ENCODE measurements at regions of chr2 and their contacts with region 1.

Region 1: GRCh38 chr2:172465417-172466334 is 38.3 kb downstream of the ITGA6 start:
- DNase-seq: peak; percentile 82
- H3K4me3 Mint-ChIP-seq: peak overlapping the region; percentile 38
- H3K27ac Mint-ChIP-seq: peak overlapping the region; percentile 95
- H3K4me1 Mint-ChIP-seq: peaks cover 58% of the 10 kb centered on the region
- H3K27me3 Mint-ChIP-seq: no peaks in the 10 kb centered on the region
- CTCF ChIP-seq: peak; percentile 87

Region 2: GRCh38 chr2:171409436-171409971 is 1056.2 kb before region 1 on chr2:
- CTCF ChIA-PET with region 1: no interaction called
- POLR2A ChIA-PET with region 1: no interaction called
- intact Hi-C with region 1: no loop called
- DNase-seq: peak; percentile 46
- H3K4me3 Mint-ChIP-seq: peak overlapping the region; percentile 81
- H3K27ac Mint-ChIP-seq: peak overlapping the region; percentile 94
- H3K4me1 Mint-ChIP-seq: peaks cover 44% of the 10 kb centered on the region
- H3K27me3 Mint-ChIP-seq: no peaks in the 10 kb centered on the region
- CTCF ChIP-seq: no peak

Region 3: DNA sequence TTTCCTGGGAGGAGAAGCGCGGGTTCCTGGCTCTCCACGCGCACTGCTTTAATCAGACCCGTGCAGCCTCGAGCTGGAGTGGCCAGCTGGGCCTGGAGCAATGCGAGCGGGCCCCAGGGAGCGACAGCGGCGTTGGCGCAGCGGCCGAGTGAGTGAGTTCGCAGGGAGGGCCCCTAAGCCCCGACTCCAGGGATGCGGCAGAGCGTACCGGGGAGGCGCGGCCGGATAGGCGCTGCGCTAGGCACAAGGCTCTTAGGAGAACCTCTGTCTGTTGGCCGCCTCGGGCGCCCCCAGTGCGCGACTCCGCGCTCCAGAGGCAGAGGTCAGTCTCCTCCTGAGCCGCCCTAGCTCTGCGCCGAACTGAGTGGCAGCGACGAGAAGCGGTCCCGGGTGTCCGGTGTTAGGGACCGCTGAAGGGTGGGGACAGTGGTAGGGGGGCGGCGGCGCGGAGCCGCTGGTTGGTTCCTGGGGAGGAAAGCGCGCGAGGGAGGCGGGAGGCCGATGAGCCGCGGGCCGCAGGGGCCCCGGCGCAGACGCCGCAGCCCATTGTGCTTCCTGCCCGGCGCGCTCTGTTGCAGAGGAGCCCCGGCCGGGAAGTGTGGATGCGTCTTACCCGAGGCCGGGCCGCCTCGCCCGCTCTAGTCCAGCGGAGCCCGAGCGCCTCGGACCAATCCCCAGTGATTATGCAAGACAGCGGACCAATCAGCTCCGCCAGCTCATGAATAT is 380.8 kb before region 1 on chr2:
- CTCF ChIA-PET with region 1: no interaction called
- POLR2A ChIA-PET with region 1: no interaction called
- intact Hi-C with region 1: no loop called
- DNase-seq: peak; percentile 96
- H3K4me3 Mint-ChIP-seq: peak overlapping the region; percentile 80
- H3K27ac Mint-ChIP-seq: peak overlapping the region; percentile 47
- H3K4me1 Mint-ChIP-seq: no peaks in the 10 kb centered on the region
- H3K27me3 Mint-ChIP-seq: no peaks in the 10 kb centered on the region
- CTCF ChIP-seq: no peak

Region 4: GRCh38 chr2:172102391-172103278 is 363.0 kb before region 1 on chr2 and contains the start of gene DLX2:
- CTCF ChIA-PET with region 1: interaction called, 5 read pairs
- POLR2A ChIA-PET with region 1: no interaction called
- intact Hi-C with region 1: loop called (anchors 2 kb)
- DNase-seq: peak; percentile 90
- H3K4me3 Mint-ChIP-seq: peak within 1 kb of the TSS; percentile 92
- H3K27ac Mint-ChIP-seq: peak within 1 kb of the TSS; percentile 88
- H3K4me1 Mint-ChIP-seq: peaks cover 13% of the 10 kb centered on the region
- H3K27me3 Mint-ChIP-seq: no peaks in the 10 kb centered on the region
- CTCF ChIP-seq: no peak
- total RNA-seq, gene DLX2: 1.1 and 1.9 TPM in 2 replicates

Region 5: GRCh38 chr2:172208791-172209325 is 256.8 kb before region 1 on chr2:
- CTCF ChIA-PET with region 1: interaction called, 20 read pairs
- POLR2A ChIA-PET with region 1: interaction called, 13 read pairs
- intact Hi-C with region 1: loop called (anchors 10 kb)
- DNase-seq: peak; percentile 56
- H3K4me3 Mint-ChIP-seq: peak overlapping the region; percentile 41
- H3K27ac Mint-ChIP-seq: peak overlapping the region; percentile 91
- H3K4me1 Mint-ChIP-seq: peaks cover 26% of the 10 kb centered on the region
- H3K27me3 Mint-ChIP-seq: no peaks in the 10 kb centered on the region
- CTCF ChIP-seq: no peak

Region 6: GRCh38 chr2:172253190-172254052 is 212.3 kb before region 1 on chr2:
- CTCF ChIA-PET with region 1: interaction called, 31 read pairs
- POLR2A ChIA-PET with region 1: interaction called, 23 read pairs
- intact Hi-C with region 1: no loop called
- DNase-seq: peak; percentile 100
- H3K4me3 Mint-ChIP-seq: peak overlapping the region; percentile 56
- H3K27ac Mint-ChIP-seq: peak overlapping the region; percentile 100
- H3K4me1 Mint-ChIP-seq: peaks cover 55% of the 10 kb centered on the region
- H3K27me3 Mint-ChIP-seq: no peaks in the 10 kb centered on the region
- CTCF ChIP-seq: no peak

Region 7: DNA sequence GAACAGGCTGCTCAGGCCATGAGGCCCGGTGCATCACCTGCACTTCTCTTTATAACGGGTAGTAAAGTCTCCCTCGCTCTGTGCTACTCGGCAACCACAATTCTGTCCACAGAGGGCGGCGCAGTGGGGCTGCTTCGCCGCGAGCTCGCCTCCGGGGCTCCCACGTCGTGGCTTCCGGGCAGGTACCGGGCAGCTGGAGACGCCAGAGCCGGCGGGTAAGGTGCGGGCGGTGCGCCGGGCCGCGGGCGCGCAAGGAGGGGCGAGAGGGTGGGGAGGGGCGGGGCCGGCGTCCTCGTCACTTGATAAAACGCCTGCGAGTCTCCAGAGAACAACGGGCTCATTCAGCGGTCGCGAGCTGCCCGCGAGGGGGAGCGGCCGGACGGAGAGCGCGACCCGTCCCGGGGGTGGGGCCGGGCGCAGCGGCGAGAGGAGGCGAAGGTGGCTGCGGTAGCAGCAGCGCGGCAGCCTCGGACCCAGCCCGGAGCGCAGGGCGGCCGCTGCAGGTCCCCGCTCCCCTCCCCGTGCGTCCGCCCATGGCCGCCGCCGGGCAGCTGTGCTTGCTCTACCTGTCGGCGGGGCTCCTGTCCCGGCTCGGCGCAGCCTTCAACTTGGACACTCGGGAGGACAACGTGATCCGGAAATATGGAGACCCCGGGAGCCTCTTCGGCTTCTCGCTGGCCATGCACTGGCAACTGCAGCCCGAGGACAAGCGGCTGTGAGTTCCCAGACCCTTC is 38.3 kb before region 1 on chr2 and contains the start of gene ITGA6:
- CTCF ChIA-PET with region 1: interaction called, 536 read pairs
- POLR2A ChIA-PET with region 1: interaction called, 350 read pairs
- intact Hi-C with region 1: loop called (anchors 1 kb)
- DNase-seq: peak; percentile 83
- H3K4me3 Mint-ChIP-seq: peak within 1 kb of the TSS; percentile 86
- H3K27ac Mint-ChIP-seq: peak within 1 kb of the TSS; percentile 95
- H3K4me1 Mint-ChIP-seq: peaks cover 16% of the 10 kb centered on the region
- H3K27me3 Mint-ChIP-seq: no peaks in the 10 kb centered on the region
- CTCF ChIP-seq: no peak
- total RNA-seq, gene ITGA6: 315 and 323 TPM in 2 replicates

Region 8: DNA sequence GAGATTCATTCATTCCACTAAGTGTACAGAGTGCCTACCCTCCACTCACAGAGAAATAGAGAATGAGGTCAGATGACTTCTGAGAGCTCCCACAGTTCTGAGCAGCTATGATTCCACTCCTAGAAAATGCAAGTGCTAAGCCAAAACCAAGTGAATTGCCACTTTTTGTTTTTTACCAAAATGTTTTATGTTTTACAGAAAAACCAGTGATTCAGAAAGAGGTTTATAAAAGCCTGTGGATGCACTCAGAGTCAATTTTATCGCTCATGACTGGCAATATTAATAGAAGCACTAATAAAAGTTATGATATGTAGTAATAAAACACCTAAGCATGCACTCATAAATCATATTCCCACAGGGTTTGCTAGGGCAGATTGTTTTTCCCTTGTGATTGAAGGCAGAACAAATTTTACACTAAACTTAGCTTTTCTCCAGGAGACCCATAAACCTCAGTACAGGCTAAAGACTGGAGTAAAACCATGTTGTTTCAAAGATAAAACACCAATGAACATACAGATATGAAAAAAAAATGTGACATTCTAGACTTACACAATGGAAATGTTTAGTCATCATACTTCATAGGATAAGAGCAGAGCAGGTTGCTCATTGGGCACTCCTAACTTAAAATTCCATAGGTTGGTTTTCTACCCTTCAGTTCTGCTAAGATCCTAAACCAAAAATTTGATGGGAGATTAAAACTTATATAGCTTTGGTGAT is 157.7 kb after region 1 on chr2:
- CTCF ChIA-PET with region 1: no interaction called
- POLR2A ChIA-PET with region 1: no interaction called
- intact Hi-C with region 1: no loop called
- DNase-seq: no peak
- H3K4me3 Mint-ChIP-seq: no peak overlapping the region
- H3K27ac Mint-ChIP-seq: no peak overlapping the region
- H3K4me1 Mint-ChIP-seq: no peaks in the 10 kb centered on the region
- H3K27me3 Mint-ChIP-seq: no peaks in the 10 kb centered on the region
- CTCF ChIP-seq: no peak

Region 9: GRCh38 chr2:172710584-172711024 is 244.9 kb after region 1 on chr2:
- CTCF ChIA-PET with region 1: no interaction called
- POLR2A ChIA-PET with region 1: no interaction called
- intact Hi-C with region 1: loop called (anchors 1 kb)
- DNase-seq: peak; percentile 80
- H3K4me3 Mint-ChIP-seq: no peak overlapping the region
- H3K27ac Mint-ChIP-seq: no peak overlapping the region
- H3K4me1 Mint-ChIP-seq: peaks cover 8% of the 10 kb centered on the region
- H3K27me3 Mint-ChIP-seq: no peaks in the 10 kb centered on the region
- CTCF ChIP-seq: peak; percentile 81

Region 10: GRCh38 chr2:172985139-172985901 is 519.6 kb after region 1 on chr2:
- CTCF ChIA-PET with region 1: no interaction called
- POLR2A ChIA-PET with region 1: no interaction called
- intact Hi-C with region 1: no loop called
- DNase-seq: peak; percentile 83
- H3K4me3 Mint-ChIP-seq: peak overlapping the region; percentile 65
- H3K27ac Mint-ChIP-seq: peak overlapping the region; percentile 64
- H3K4me1 Mint-ChIP-seq: peaks cover 13% of the 10 kb centered on the region
- H3K27me3 Mint-ChIP-seq: peaks cover 5% of the 10 kb centered on the region
- CTCF ChIP-seq: no peak